Adrenal gland (tissue), 19 donors: ENCODE measurements at regions of chr19 and their contacts with region 1.

Region 1: DNA sequence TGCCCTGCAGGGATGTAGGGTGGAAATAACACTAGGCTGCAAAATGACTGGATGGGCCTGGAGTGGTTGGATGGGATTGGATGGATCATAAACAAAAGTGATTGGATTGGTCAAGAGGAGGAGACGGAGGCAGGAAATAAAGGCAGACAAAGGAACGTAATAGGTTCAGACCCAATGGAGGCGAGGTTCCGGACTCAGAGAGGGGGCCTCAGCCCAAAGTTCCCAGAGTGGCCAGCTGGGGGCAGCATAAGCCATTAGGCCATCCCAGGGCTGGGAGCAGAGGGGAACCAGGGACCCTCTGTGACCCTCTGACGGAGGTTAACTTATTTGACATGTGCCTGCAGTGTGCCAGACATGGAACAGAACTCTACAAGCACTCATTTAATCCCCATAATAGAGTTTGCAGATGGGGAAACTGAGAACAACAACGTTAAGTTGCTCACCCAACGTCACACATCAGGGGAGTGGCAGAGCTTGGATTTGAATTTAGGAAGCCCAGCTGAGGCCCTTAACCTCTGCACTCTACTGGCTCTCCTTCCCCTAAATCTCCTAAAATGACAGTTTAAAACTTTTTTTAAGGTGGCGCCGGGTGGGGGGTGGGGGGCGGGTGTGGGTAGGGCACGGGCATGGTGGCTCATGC is 15.3 kb upstream of the MAP1S start:
- DNase-seq: peak; percentile 49 to 83 (median 52)
- H3K4me3 ChIP-seq: no peak overlapping the region
- H3K27ac ChIP-seq: no peak overlapping the region
- H3K4me1 ChIP-seq: no peaks in the 10 kb centered on the region
- H3K27me3 ChIP-seq: no peaks in the 10 kb centered on the region
- CTCF ChIP-seq: peak; percentile 62 to 82 (median 77)
- POLR2A ChIP-seq: no peak

Region 2: GRCh38 chr19:17766543-17767131 is 62.7 kb after region 1 on chr19:
- intact Hi-C with region 1: loop called (anchors 2 to 5 kb)
- DNase-seq: peak; percentile 82 to 95 (median 91)
- H3K4me3 ChIP-seq: no peak overlapping the region
- H3K27ac ChIP-seq: no peak overlapping the region
- H3K4me1 ChIP-seq: peaks cover 0 to 5% of the 10 kb centered on the region in 2 donors
- H3K27me3 ChIP-seq: no peaks in the 10 kb centered on the region
- CTCF ChIP-seq: peak; percentile 77 to 89 (median 86)
- POLR2A ChIP-seq: no peak

Region 3: GRCh38 chr19:17926044-17926443 is 222.1 kb after region 1 on chr19:
- intact Hi-C with region 1: no loop called
- DNase-seq: no peak
- H3K4me3 ChIP-seq: no peak overlapping the region
- H3K27ac ChIP-seq: no peak overlapping the region
- H3K4me1 ChIP-seq: no peaks in the 10 kb centered on the region
- H3K27me3 ChIP-seq: no peaks in the 10 kb centered on the region
- CTCF ChIP-seq: no peak
- POLR2A ChIP-seq: no peak